ENCODE measurements at regions of chrX and their contacts with region 1.

Region 1: GRCh38 chrX:109632906-109633504 is 8.0 kb upstream of the KCNE5 start:
- DNase-seq: no peak
- ATAC-seq: no peak

Region 2: GRCh38 chrX:109485470-109486340 is 147.3 kb before region 1 on chrX:
- intact Hi-C with region 1: loop called (anchors 5 kb)
- DNase-seq: peak; percentile 42
- ATAC-seq: no peak

Measured in left ventricle myocardium superior (tissue), 1 donor.